ENCODE measurements at regions of chr16 and their contacts with region 1.

Region 1: GRCh38 chr16:27455700-27456099 is 53.7 kb downstream of the IL21R start:
- DNase-seq: no peak
- H3K4me3 ChIP-seq: no peak overlapping the region
- H3K27ac ChIP-seq: no peak overlapping the region
- H3K4me1 ChIP-seq: no peaks in the 10 kb centered on the region
- H3K27me3 ChIP-seq: no peaks in the 10 kb centered on the region
- CTCF ChIP-seq: no peak

Region 2: DNA sequence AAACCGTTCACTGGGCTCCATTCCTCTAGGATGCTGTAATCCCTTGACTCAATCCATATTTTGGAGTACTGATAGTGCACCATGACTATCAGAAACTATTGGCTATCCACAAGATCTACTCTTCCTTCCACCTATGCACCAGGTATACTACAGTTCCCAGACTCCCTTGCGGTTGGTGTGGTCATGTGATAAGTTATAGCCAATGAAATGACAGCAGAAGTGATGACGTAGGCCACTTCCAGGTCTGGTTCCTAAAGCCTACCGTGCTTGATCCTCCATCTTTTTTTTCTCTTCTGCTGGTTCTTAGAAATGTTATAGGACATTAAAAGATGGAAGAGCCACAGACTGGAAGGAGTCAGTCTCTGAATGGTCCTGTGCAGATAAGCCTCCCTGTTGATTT is 667.8 kb before region 1 on chr16:
- intact Hi-C with region 1: no loop called
- DNase-seq: no peak
- H3K4me3 ChIP-seq: no peak overlapping the region
- H3K27ac ChIP-seq: no peak overlapping the region
- H3K4me1 ChIP-seq: no peaks in the 10 kb centered on the region
- H3K27me3 ChIP-seq: no peaks in the 10 kb centered on the region
- CTCF ChIP-seq: no peak

Region 3: DNA sequence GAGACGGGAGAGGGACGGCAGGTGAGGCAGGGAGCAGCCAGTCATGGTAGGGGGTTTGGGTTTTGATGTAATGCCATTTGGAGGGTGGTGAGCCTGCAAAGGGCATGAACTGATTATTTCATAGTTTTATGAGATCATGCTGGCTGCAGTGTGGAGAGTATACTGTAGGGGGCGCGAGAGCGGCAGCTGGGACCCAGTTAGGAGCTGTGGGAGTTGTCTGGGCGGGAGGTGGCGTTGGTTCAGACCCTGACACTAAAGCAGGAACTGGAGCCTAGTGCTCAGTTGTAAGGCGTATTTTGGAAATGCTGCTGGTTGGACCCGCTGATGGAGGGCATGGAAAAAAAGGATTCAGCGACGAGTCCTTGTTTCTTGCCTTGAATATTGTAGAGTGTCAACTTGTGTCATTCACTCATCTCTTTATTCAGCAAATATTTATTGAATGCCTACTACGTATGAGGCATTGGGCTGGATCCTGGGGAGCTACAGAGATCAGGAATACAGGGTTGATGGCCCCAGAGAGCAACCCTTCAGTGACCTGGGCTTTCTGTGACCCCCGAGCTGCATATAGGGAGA is 276.1 kb before region 1 on chr16:
- intact Hi-C with region 1: loop called (anchors 2 kb)
- DNase-seq: peak; percentile 21 to 91
- H3K4me3 ChIP-seq: no peak overlapping the region
- H3K27ac ChIP-seq: no peak overlapping the region
- H3K4me1 ChIP-seq: no peaks in the 10 kb centered on the region
- H3K27me3 ChIP-seq: no peaks in the 10 kb centered on the region
- CTCF ChIP-seq: peak; percentile 80 to 88 (median 87)